Posterior cingulate gyrus (tissue), 11 donors: ENCODE measurements at regions of chr6 and their contacts with region 1.

Region 1: DNA sequence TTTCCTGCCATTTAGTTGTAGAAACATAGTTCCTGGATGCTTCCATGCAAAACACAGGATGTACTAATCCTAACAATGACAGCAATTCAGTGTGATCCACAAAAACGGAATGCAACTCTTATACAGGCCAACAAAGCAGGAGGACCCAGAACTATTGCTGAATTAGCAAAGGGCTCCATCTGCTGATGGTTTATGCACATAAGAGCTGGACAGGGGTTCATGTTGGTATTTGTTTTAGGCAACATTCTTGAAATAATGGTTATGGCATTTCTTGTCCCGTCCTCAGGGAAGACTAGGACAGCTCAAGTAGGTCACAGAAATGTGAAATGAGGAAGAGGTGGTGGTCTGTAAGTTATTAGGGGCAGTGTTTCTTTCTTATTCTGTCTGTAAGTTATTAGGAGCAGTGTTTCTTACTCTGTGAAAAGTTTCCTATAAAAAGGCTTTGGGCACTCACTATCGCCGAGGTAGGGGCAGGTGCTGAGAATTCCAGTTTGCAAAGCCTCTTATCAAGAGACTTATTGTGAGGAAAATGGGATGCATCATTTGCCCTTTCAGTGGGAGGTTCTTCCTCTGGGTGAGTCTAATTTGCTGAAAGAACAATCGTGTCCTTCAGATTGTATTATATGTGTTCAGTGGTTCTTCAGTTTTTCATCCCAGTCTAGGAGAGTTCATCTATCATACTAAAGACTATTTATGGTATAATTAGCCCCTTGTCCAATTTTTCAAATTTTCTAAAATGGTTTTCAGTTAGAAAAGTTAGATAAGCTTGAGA is 171.1 kb downstream of the MCHR2 start:
- DNase-seq: no peak

Region 2: GRCh38 chr6:99467509-99468106 is 355.3 kb before region 1 on chr6:
- intact Hi-C with region 1: loop called (anchors 2 kb)
- DNase-seq: no peak